ENCODE measurements at regions of chr9 and their contacts with region 1.

Region 1: DNA sequence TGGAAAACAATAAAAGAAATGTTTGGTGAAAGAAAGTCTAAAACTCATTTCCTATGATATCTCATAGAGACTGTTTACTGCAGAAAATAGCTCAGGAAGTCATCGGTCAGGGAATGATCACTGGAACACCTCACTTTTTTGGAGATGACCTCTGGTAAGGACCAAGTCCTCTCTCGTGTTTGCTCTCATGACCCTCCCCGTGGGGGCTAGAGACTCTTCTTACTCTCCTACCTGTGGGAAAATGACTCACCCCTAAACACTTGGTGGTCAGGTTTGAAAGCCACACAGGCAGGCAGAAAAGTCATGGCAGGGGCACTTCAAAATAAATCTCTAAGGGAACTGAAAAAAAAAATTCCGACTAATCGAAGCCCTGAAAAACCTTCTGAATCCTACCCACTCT is 48.2 kb downstream of the FAM240B start:
- DNase-seq: no peak
- ATAC-seq: no peak
- H3K4me3 ChIP-seq: peak overlapping the region; percentile 26 to 43
- H3K27ac ChIP-seq: peak overlapping the region; percentile 69
- H3K4me1 ChIP-seq: peaks cover 5% of the 10 kb centered on the region; the same call in 1 of the 2 replicates
- H3K27me3 ChIP-seq: no peaks in the 10 kb centered on the region
- CTCF ChIP-seq: no peak

Region 2: GRCh38 chr9:38620483-38621433 is 51.0 kb before region 1 on chr9 and contains the start of gene ANKRD18A:
- CTCF ChIA-PET with region 1: no interaction called
- POLR2A ChIA-PET with region 1: no interaction called
- in situ Hi-C with region 1: no loop called
- intact Hi-C with region 1: loop called (anchors 5 kb)
- DNase-seq: peak; percentile 61
- ATAC-seq: peak; percentile 90
- H3K4me3 ChIP-seq: peak within 1 kb of the TSS; percentile 56 to 77
- H3K27ac ChIP-seq: peak within 1 kb of the TSS; percentile 75
- H3K4me1 ChIP-seq: no peaks in the 10 kb centered on the region; the same call in 1 of the 2 replicates
- H3K27me3 ChIP-seq: no peaks in the 10 kb centered on the region
- CTCF ChIP-seq: peak; percentile 89
- total RNA-seq, gene ANKRD18A: 9.6 TPM

Region 3: DNA sequence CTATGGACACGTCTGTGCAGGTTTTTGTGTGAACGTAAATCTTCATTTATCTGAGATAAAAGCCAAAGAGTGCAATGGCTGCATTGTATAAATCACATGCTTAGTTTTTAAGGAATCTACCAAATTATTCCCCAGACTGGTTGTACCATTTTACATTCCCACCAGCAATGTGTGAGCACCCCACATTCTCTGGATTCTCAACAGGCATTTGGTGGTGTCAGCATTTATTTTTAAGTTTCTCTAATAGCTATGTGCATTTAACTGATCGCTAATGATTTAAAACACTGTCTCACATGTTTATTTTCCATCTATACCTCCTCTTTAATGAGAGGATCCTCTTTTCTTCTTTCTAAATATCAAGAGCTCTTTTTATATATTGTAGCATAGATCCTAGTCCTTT is 37.4 kb before region 1 on chr9:
- CTCF ChIA-PET with region 1: no interaction called
- POLR2A ChIA-PET with region 1: no interaction called
- in situ Hi-C with region 1: no loop called
- intact Hi-C with region 1: no loop called
- DNase-seq: no peak
- ATAC-seq: no peak
- H3K4me3 ChIP-seq: no peak overlapping the region
- H3K27ac ChIP-seq: no peak overlapping the region
- H3K4me1 ChIP-seq: no peaks in the 10 kb centered on the region; the same call in 1 of the 2 replicates
- H3K27me3 ChIP-seq: no peaks in the 10 kb centered on the region
- CTCF ChIP-seq: no peak

Region 4: DNA sequence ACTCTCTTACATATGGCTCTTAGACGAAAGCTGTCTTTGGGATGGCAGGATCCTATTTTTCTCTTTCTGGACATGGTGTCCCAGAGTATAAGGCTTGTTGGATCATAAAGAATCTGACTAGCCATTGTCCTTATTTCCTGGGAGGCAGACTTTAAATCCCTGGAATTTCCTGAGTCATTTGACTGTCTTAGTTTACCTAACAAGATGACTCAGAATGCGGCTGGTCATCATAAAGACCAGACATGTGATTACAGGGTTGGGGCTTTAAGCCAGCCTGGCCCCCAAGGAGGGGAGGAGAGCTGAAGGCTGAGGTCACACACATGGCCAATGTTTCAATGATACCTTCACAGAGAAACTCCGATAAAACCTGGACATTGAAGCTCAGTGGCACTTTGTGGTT is 11.0 kb after region 1 on chr9:
- CTCF ChIA-PET with region 1: interaction called, 3 read pairs
- POLR2A ChIA-PET with region 1: interaction called, 12 read pairs
- in situ Hi-C with region 1: no loop called
- intact Hi-C with region 1: no loop called
- DNase-seq: peak; percentile 75
- ATAC-seq: peak; percentile 61
- H3K4me3 ChIP-seq: no peak overlapping the region
- H3K27ac ChIP-seq: peak overlapping the region; percentile 71
- H3K4me1 ChIP-seq: peaks cover 16% of the 10 kb centered on the region
- H3K27me3 ChIP-seq: no peaks in the 10 kb centered on the region
- CTCF ChIP-seq: no peak

Region 5: DNA sequence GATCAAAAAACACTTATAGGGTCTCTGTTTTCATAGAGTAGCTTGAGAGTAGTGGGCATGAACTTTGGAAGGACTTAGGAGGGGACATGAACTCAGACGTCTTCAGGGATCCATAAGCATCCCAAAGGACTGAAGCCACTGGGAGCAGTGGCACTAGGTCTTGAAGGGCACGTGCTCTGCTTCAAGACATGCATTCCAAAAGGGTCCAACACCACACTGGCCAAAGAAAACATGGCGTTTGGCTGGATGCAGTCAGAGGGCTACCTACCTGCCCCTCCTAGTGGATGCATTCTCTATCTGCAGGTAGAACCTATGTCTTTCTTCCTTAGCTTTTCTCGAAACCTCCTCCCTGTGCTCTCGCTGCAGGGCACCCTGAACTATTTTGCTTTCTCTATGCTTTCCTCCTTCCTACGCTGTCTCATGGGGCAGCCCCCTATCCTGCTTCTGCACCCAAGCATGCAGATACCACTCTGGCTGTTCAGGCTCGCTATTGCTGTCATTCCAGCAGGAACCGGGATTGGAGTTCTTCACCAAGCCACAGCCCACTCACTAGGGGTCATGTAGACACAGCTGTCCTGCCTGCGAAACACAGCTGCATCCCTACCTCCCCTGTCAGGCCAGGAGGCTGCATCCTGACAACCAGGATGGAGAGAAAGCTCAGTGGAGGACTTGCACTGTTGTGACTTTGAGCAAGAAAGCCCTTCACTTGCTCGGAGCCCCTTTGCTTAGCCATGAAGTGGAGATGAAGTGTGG is 36.3 kb after region 1 on chr9:
- CTCF ChIA-PET with region 1: no interaction called
- POLR2A ChIA-PET with region 1: no interaction called
- in situ Hi-C with region 1: no loop called
- intact Hi-C with region 1: loop called (anchors 5 kb)
- DNase-seq: no peak
- ATAC-seq: peak; percentile 74
- H3K4me3 ChIP-seq: no peak overlapping the region
- H3K27ac ChIP-seq: no peak overlapping the region
- H3K4me1 ChIP-seq: no peaks in the 10 kb centered on the region
- H3K27me3 ChIP-seq: no peaks in the 10 kb centered on the region
- CTCF ChIP-seq: peak; percentile 62

Region 6: GRCh38 chr9:38756702-38757101 is 85.0 kb after region 1 on chr9:
- CTCF ChIA-PET with region 1: no interaction called
- POLR2A ChIA-PET with region 1: no interaction called
- in situ Hi-C with region 1: no loop called
- intact Hi-C with region 1: no loop called
- DNase-seq: no peak
- ATAC-seq: no peak
- H3K4me3 ChIP-seq: no peak overlapping the region
- H3K27ac ChIP-seq: no peak overlapping the region
- H3K4me1 ChIP-seq: no peaks in the 10 kb centered on the region
- H3K27me3 ChIP-seq: no peaks in the 10 kb centered on the region
- CTCF ChIP-seq: no peak